ENCODE measurements at regions of chr9 and their contacts with region 1.

Region 1: GRCh38 chr9:114385412-114386181 is 2.2 kb downstream of the AKNA start:
- DNase-seq: no peak
- H3K4me3 ChIP-seq: peak overlapping the region; percentile 35
- CTCF ChIP-seq: no peak

Region 2: DNA sequence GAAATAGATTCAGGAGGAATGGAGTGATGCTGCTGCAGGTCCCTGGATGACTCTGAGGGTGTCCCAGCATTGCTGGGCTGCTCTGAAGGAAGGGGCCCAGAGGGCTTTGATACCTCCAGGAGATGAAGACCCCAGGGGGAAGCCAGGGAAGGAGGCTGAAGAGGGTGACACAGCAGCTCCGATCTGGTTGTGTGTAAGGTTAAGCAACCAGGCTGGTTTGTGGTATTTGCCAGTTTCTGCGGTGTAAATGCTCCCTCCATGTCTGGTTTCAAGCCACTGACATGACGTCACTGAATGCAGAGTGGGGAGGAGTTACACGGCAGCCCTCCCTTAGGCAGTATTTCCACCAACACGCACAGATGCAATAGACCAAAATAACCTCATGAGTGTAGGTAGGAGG is 102.7 kb before region 1 on chr9:
- CTCF ChIA-PET with region 1: no interaction called
- POLR2A ChIA-PET with region 1: no interaction called
- DNase-seq: peak; percentile 96
- H3K4me3 ChIP-seq: no peak overlapping the region
- CTCF ChIP-seq: no peak

Region 3: GRCh38 chr9:114339130-114339908 is 46.3 kb before region 1 on chr9:
- CTCF ChIA-PET with region 1: interaction called, 10 read pairs
- POLR2A ChIA-PET with region 1: no interaction called
- DNase-seq: no peak
- H3K4me3 ChIP-seq: no peak overlapping the region
- CTCF ChIP-seq: peak; percentile 88

Region 4: DNA sequence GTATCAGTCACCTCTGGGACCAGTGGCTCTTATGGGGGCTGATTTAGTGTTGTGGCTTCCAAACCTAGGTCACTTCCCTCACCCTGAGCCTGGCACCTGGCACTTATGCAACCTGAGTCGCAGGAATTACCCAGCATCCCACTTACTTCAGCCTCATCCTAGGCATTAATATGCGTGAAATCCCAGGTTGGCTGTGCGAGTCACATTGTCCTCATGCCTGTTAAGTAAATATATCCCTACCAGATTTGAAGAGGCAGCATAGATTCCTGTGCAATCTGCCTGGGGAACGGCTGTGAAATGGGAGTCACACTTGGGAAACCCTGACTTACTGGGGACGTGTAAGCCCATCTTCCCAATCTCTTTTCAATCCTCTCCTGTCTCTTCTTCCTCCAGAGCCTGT is 44.9 kb after region 1 on chr9:
- CTCF ChIA-PET with region 1: no interaction called
- POLR2A ChIA-PET with region 1: no interaction called
- DNase-seq: no peak
- H3K4me3 ChIP-seq: no peak overlapping the region
- CTCF ChIP-seq: no peak

Measured in AG04449 (cell line).